ENCODE measurements at regions of chr10 and their contacts with region 1.

Region 1: GRCh38 chr10:59735296-59735695 is 18.0 kb downstream of the MRLN start:
- DNase-seq: no peak
- ATAC-seq: no peak
- H3K4me3 ChIP-seq: no peak overlapping the region
- H3K27ac ChIP-seq: no peak overlapping the region
- H3K4me1 ChIP-seq: no peaks in the 10 kb centered on the region
- H3K27me3 ChIP-seq: peaks cover 9% of the 10 kb centered on the region
- CTCF ChIP-seq: no peak

Region 2: DNA sequence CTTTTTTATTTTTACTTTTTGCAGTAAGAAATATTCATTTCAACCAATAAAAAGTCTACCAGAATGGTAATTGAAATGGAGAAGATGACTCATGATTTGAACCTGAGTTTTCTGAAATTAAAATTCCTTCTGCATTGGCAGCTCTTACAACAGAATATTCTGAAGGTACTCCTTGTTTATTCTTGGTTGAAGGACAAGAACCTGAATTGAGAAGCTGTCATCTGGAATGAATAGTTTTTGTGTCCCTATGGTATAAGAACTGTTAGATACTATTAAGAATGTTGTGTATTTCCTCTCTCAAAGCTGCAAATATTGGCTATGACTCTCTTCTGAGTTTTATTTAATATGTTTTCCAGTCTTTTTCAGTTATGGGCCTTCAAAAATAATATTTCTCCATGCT is 1099.1 kb after region 1 on chr10:
- CTCF ChIA-PET with region 1: no interaction called
- POLR2A ChIA-PET with region 1: no interaction called
- in situ Hi-C with region 1: no loop called
- intact Hi-C with region 1: loop called (anchors 10 kb)
- DNase-seq: no peak
- ATAC-seq: no peak
- H3K4me3 ChIP-seq: no peak overlapping the region
- H3K27ac ChIP-seq: no peak overlapping the region
- H3K4me1 ChIP-seq: no peaks in the 10 kb centered on the region
- H3K27me3 ChIP-seq: no peaks in the 10 kb centered on the region
- CTCF ChIP-seq: no peak